OCI-LY7 (cell line): ENCODE measurements at regions of chr4 and their contacts with region 1.

Region 1: GRCh38 chr4:72326692-72327632 is 242.1 kb downstream of the ADAMTS3 start:
- DNase-seq: peak; percentile 41
- H3K4me3 ChIP-seq: no peak overlapping the region
- H3K27ac ChIP-seq: no peak overlapping the region
- H3K4me1 ChIP-seq: no peaks in the 10 kb centered on the region
- CTCF ChIP-seq: peak; percentile 83

Region 2: DNA sequence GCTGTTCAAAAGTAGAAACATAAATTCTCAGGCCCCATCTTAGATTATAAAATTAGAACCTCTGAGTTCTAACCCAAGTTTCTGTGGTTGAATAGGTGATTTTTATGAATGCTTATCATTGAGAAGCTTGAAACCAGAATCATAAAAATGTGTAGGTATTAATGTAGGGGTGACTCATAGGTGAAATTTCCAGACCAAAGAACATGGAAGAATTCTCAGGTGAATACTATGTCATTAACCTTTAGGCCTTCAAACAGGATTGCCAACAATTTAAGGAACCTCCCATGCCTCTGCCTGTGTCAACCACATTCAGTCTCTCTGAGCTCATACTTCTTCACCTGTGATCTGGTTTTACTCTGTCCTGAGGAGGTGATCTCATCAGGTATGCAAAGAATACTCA is 117.4 kb before region 1 on chr4:
- CTCF ChIA-PET with region 1: no interaction called
- POLR2A ChIA-PET with region 1: no interaction called
- intact Hi-C with region 1: no loop called
- DNase-seq: no peak
- H3K4me3 ChIP-seq: no peak overlapping the region
- H3K27ac ChIP-seq: no peak overlapping the region
- H3K4me1 ChIP-seq: no peaks in the 10 kb centered on the region
- CTCF ChIP-seq: no peak

Region 3: GRCh38 chr4:72468904-72469502 is 142.0 kb after region 1 on chr4:
- CTCF ChIA-PET with region 1: no interaction called
- POLR2A ChIA-PET with region 1: no interaction called
- intact Hi-C with region 1: loop called (anchors 5 kb)
- DNase-seq: peak; percentile 34
- H3K4me3 ChIP-seq: no peak overlapping the region
- H3K27ac ChIP-seq: no peak overlapping the region
- H3K4me1 ChIP-seq: no peaks in the 10 kb centered on the region
- CTCF ChIP-seq: peak; percentile 86